ENCODE measurements at regions of chr17 and their contacts with region 1.

Region 1: GRCh38 chr17:7862692-7863437 is 5.1 kb downstream of the CYB5D1 start:
- DNase-seq: peak; percentile 66
- H3K4me3 Mint-ChIP-seq: no peak overlapping the region
- H3K27ac Mint-ChIP-seq: no peak overlapping the region
- H3K4me1 Mint-ChIP-seq: peaks cover 18% of the 10 kb centered on the region
- H3K27me3 Mint-ChIP-seq: no peaks in the 10 kb centered on the region

Region 2: GRCh38 chr17:7897773-7898172 is 34.9 kb after region 1 on chr17:
- CTCF ChIA-PET with region 1: interaction called, 38 read pairs
- DNase-seq: no peak
- H3K4me3 Mint-ChIP-seq: no peak overlapping the region
- H3K27ac Mint-ChIP-seq: no peak overlapping the region
- H3K4me1 Mint-ChIP-seq: peaks cover 4% of the 10 kb centered on the region
- H3K27me3 Mint-ChIP-seq: no peaks in the 10 kb centered on the region

Region 3: GRCh38 chr17:7903154-7904103 is 40.6 kb after region 1 on chr17:
- CTCF ChIA-PET with region 1: interaction called, 38 read pairs
- DNase-seq: no peak
- H3K4me3 Mint-ChIP-seq: no peak overlapping the region
- H3K27ac Mint-ChIP-seq: no peak overlapping the region
- H3K4me1 Mint-ChIP-seq: no peaks in the 10 kb centered on the region
- H3K27me3 Mint-ChIP-seq: no peaks in the 10 kb centered on the region

Region 4: GRCh38 chr17:7915611-7916382 is 52.9 kb after region 1 on chr17 and contains the start of gene RNF227:
- CTCF ChIA-PET with region 1: interaction called, 16 read pairs
- DNase-seq: peak; percentile 89
- H3K4me3 Mint-ChIP-seq: peak within 1 kb of the TSS; percentile 87
- H3K27ac Mint-ChIP-seq: peak within 1 kb of the TSS; percentile 94
- H3K4me1 Mint-ChIP-seq: peaks cover 43% of the 10 kb centered on the region
- H3K27me3 Mint-ChIP-seq: peaks cover 4% of the 10 kb centered on the region

Region 5: GRCh38 chr17:8041249-8041928 is 178.5 kb after region 1 on chr17:
- CTCF ChIA-PET with region 1: interaction called, 12 read pairs
- DNase-seq: peak; percentile 67
- H3K4me3 Mint-ChIP-seq: no peak overlapping the region
- H3K27ac Mint-ChIP-seq: no peak overlapping the region
- H3K4me1 Mint-ChIP-seq: no peaks in the 10 kb centered on the region
- H3K27me3 Mint-ChIP-seq: peaks cover 59% of the 10 kb centered on the region